Transverse colon (tissue), 4 donors: ENCODE measurements at regions of chr16 and their contacts with region 1.

Region 1: GRCh38 chr16:57300387-57301125 is 16.1 kb upstream of the PLLP start:
- DNase-seq: peak; percentile 99
- H3K4me3 ChIP-seq: peak overlapping the region in 3 of 4 donors; percentile 27 to 52 (median 36)
- H3K27ac ChIP-seq: peak overlapping the region; percentile 88 to 96 (median 92)
- H3K4me1 ChIP-seq: peaks cover 9 to 38% (median 24%) of the 10 kb centered on the region in 4 donors
- H3K27me3 ChIP-seq: no peaks in the 10 kb centered on the region
- CTCF ChIP-seq: peak; percentile 84 to 100 (median 93)
- EP300 ChIP-seq: no peak
- POLR2A ChIP-seq: peak; percentile 40

Region 2: GRCh38 chr16:57413301-57413730 is 112.8 kb after region 1 on chr16:
- in situ Hi-C with region 1: loop called (anchors 5 to 10 kb)
- intact Hi-C with region 1: loop called (anchors 2 kb)
- DNase-seq: no peak
- H3K4me3 ChIP-seq: no peak overlapping the region
- H3K27ac ChIP-seq: no peak overlapping the region
- H3K4me1 ChIP-seq: peaks cover 6 to 16% (median 12%) of the 10 kb centered on the region in 4 donors
- H3K27me3 ChIP-seq: no peaks in the 10 kb centered on the region
- CTCF ChIP-seq: no peak
- EP300 ChIP-seq: no peak
- POLR2A ChIP-seq: no peak

Region 3: DNA sequence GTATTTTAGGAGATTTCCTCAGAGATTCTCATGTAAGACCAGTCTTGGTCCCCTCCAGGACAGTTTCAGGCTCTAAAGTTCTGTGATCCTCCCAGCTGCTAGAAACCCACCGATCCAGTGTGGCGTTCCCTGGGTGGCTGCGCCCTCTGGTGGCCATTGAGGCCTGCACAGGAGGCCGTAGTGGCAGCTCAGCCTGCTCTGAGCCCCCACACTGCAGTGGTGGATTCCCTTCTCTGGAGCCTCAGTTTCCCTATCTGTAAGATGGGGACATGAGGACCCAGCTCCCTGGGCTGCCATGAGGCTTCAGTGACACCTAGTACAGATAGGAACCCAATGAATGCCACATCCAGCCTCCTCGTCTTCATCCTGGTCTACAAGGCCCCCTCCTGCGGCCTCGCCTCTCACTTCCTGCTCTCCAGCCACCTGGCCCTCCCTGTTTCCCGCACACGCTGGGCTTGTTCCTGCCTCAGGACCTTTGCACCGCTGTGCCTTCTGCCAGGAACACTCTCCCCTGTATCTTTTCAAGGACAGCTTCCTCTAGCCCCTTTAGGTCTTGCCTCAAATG is 219.3 kb after region 1 on chr16:
- in situ Hi-C with region 1: loop called in 3 of 4 experiments (anchors 10 kb)
- intact Hi-C with region 1: no loop called
- DNase-seq: peak; percentile 83
- H3K4me3 ChIP-seq: no peak overlapping the region
- H3K27ac ChIP-seq: no peak overlapping the region
- H3K4me1 ChIP-seq: peaks cover 0 to 7% (median 0%) of the 10 kb centered on the region in 4 donors
- H3K27me3 ChIP-seq: no peaks in the 10 kb centered on the region
- CTCF ChIP-seq: peak; percentile 92 to 96 (median 95)
- EP300 ChIP-seq: no peak
- POLR2A ChIP-seq: no peak